Activated CD4-positive, alpha-beta T cell treated with anti-CD3 and anti-CD28 coated beads for 36 hours (primary cell): ENCODE measurements at regions of chr21 and their contacts with region 1.

Region 1: DNA sequence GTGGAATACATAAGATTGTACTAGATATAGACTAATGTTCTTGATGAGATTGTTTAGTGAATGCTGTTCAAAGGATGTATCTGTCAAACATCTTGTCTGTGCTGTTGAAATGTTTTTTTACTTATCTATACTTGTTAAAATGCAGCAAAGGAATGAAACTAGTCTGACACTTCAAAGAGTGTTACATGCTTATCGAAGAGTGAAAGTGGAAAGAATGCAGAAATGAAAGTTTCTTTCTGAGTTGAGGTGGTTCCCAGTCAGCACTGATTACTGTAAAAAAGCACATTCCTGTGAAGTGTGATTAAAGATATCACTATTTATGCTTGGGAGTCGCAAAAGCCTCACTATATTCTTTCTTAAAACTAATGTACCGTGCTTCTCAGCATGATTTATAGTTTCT is 1225.2 kb downstream of the NCAM2 start:
- DNase-seq: no peak
- ATAC-seq: peak; percentile 97
- H3K4me3 Mint-ChIP-seq: no peak overlapping the region
- H3K27ac Mint-ChIP-seq: no peak overlapping the region
- H3K4me1 Mint-ChIP-seq: peaks cover 12% of the 10 kb centered on the region
- H3K27me3 Mint-ChIP-seq: no peaks in the 10 kb centered on the region

Region 2: GRCh38 chr21:22263890-22264289 is 40.5 kb after region 1 on chr21:
- CTCF ChIA-PET with region 1: no interaction called
- POLR2A ChIA-PET with region 1: no interaction called
- intact Hi-C with region 1: loop called in 1 of 2 experiments (anchors 1 kb)
- DNase-seq: no peak
- ATAC-seq: no peak
- H3K4me3 Mint-ChIP-seq: no peak overlapping the region
- H3K27ac Mint-ChIP-seq: no peak overlapping the region
- H3K4me1 Mint-ChIP-seq: no peaks in the 10 kb centered on the region
- H3K27me3 Mint-ChIP-seq: no peaks in the 10 kb centered on the region

Region 3: DNA sequence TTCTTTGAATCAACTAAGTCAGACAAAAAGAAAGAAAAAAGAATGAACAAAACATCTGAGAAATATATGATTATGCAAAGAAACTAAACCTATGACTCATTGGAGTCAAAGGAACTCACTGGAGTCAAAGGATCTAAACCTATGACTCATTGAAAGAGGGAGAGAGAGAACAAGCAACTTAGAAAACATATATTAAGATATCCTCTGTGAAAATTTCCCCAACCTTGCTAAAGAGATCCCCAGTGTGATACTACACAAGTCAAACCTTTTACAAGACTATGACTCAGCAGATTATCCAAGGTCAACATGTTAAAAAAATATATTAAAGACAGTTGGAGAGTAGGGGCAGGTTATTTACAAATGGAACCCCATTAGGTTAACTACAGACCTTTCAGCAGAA is 313.1 kb after region 1 on chr21:
- CTCF ChIA-PET with region 1: no interaction called
- POLR2A ChIA-PET with region 1: no interaction called
- intact Hi-C with region 1: loop called in 1 of 2 experiments (anchors 10 kb)
- DNase-seq: no peak
- ATAC-seq: peak; percentile 91
- H3K4me3 Mint-ChIP-seq: no peak overlapping the region
- H3K27ac Mint-ChIP-seq: no peak overlapping the region
- H3K4me1 Mint-ChIP-seq: peaks cover 16% of the 10 kb centered on the region
- H3K27me3 Mint-ChIP-seq: peaks cover 2% of the 10 kb centered on the region